CD4-positive, alpha-beta memory T cell (primary cell): ENCODE measurements at regions of chr16 and their contacts with region 1.

Region 1: GRCh38 chr16:67561824-67562525 is 351 bp upstream of the CTCF start:
- DNase-seq: peak; percentile 96 to 98 (median 97)
- H3K4me3 ChIP-seq: peak overlapping the region; percentile 61 to 78
- H3K4me3 Mint-ChIP-seq: peak overlapping the region; percentile 89 to 97 (median 91)
- H3K27ac ChIP-seq: peak overlapping the region; percentile 73
- H3K27ac Mint-ChIP-seq: peak overlapping the region; percentile 92 to 97 (median 96)
- H3K4me1 ChIP-seq: peaks cover 52% of the 10 kb centered on the region
- H3K4me1 Mint-ChIP-seq: peaks cover 23 to 53% (median 37%) of the 10 kb centered on the region in 4 donors
- H3K27me3 ChIP-seq: no peaks in the 10 kb centered on the region
- H3K27me3 Mint-ChIP-seq: no peaks in the 10 kb centered on the region

Region 2: GRCh38 chr16:67226804-67227557 is 335.0 kb before region 1 on chr16 and contains the start of gene TMEM208:
- CTCF ChIA-PET with region 1: no interaction called
- POLR2A ChIA-PET with region 1: no interaction called
- intact Hi-C with region 1: loop called (anchors 1 kb)
- DNase-seq: peak; percentile 95 to 99 (median 97)
- H3K4me3 ChIP-seq: peak within 1 kb of the TSS; percentile 73 to 99
- H3K4me3 Mint-ChIP-seq: peak within 1 kb of the TSS; percentile 98 to 100 (median 100)
- H3K27ac ChIP-seq: peak within 1 kb of the TSS; percentile 88
- H3K27ac Mint-ChIP-seq: peak within 1 kb of the TSS; percentile 96 to 100 (median 99)
- H3K4me1 ChIP-seq: peaks cover 51% of the 10 kb centered on the region
- H3K4me1 Mint-ChIP-seq: peaks cover 43 to 58% (median 54%) of the 10 kb centered on the region in 4 donors
- H3K27me3 ChIP-seq: no peaks in the 10 kb centered on the region
- H3K27me3 Mint-ChIP-seq: no peaks in the 10 kb centered on the region
- total RNA-seq, gene TMEM208: 35.5 to 35.7 TPM

Region 3: DNA sequence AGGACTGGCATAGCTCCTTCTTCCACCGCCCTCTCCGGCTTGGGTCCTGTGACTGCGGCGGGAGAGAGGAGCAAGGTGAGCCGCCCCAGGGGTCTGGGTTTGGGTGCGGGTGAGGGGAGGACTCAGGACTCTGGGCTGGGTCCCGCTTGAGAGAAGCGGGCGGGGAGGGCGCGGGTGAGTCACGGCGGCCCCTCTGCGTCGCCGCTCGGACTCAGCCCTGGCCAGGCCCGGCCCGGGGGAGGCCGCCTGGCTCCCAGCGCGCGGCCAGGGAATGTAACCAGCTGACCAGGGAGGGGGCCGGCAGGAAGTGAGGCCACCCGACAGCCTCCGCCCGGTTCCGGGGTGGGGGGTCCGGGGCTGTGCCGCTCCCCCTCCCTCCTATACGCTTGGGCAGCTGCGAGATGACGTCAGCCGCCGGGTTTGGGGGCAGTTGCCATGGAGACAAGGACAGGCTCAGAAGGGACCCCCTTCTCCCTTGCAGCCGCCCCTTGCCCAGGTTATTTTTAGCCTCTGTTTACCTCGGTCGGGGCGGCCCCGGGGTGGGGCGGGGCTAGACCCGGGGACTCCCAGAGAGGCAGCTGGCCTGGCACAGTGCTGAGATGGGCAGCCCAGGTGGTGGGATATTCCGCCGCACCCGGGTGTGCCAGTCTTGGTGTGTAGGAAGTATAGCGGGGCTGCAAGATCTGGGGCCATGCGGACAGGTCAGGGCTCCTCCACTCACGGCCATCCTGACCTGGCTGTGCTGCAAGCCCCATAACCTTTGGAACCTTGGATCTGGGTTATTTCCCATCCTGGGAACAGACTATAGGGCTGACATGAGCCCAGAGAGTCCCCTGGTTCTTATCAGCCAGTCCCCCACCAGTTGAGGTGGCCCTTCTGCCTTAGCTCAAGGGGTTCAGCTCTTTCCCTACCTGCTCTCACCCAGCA is 31.7 kb before region 1 on chr16:
- CTCF ChIA-PET with region 1: interaction called, 4 read pairs
- POLR2A ChIA-PET with region 1: interaction called, 16 read pairs
- intact Hi-C with region 1: no loop called
- DNase-seq: peak in 1 of 5 donors; percentile 55
- H3K4me3 ChIP-seq: peak overlapping the region in 1 of 2 donors; percentile 50
- H3K4me3 Mint-ChIP-seq: peak overlapping the region; percentile 73 to 87 (median 80)
- H3K27ac ChIP-seq: no peak overlapping the region
- H3K27ac Mint-ChIP-seq: peak overlapping the region in 2 of 7 donors; percentile 58 to 70
- H3K4me1 ChIP-seq: peaks cover 28% of the 10 kb centered on the region
- H3K4me1 Mint-ChIP-seq: peaks cover 6 to 38% (median 24%) of the 10 kb centered on the region in 4 donors
- H3K27me3 ChIP-seq: peaks cover 7% of the 10 kb centered on the region
- H3K27me3 Mint-ChIP-seq: peaks cover 4 to 14% of the 10 kb centered on the region in 2 donors

Region 4: DNA sequence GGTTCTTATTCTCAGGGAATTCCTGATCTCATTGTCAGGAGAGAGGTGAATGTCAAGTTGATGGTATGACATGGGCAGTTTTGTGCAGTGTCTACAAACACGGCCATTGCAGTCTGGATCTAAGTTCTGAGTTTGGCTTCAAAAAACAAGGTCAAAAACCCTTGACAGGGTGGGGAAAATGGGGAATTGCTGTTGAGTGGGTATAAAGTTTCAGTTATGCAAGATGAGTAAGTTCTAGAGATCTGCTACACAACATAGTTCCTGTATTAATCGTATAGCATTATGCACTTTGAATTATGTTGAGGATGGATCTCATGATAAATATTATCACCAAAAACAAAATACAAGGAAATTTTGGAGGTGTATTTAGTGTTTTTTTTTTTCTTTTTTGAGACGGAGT is 46.4 kb after region 1 on chr16:
- CTCF ChIA-PET with region 1: interaction called, 5 read pairs
- POLR2A ChIA-PET with region 1: interaction called, 3 read pairs
- intact Hi-C with region 1: loop called (anchors 5 kb)
- DNase-seq: no peak
- H3K4me3 ChIP-seq: no peak overlapping the region
- H3K4me3 Mint-ChIP-seq: no peak overlapping the region
- H3K27ac ChIP-seq: no peak overlapping the region
- H3K27ac Mint-ChIP-seq: peak overlapping the region in 4 of 7 donors; percentile 15 to 92 (median 65)
- H3K4me1 ChIP-seq: peaks cover 5% of the 10 kb centered on the region
- H3K4me1 Mint-ChIP-seq: peaks cover 13 to 26% (median 19%) of the 10 kb centered on the region in 4 donors
- H3K27me3 ChIP-seq: no peaks in the 10 kb centered on the region
- H3K27me3 Mint-ChIP-seq: no peaks in the 10 kb centered on the region

Region 5: DNA sequence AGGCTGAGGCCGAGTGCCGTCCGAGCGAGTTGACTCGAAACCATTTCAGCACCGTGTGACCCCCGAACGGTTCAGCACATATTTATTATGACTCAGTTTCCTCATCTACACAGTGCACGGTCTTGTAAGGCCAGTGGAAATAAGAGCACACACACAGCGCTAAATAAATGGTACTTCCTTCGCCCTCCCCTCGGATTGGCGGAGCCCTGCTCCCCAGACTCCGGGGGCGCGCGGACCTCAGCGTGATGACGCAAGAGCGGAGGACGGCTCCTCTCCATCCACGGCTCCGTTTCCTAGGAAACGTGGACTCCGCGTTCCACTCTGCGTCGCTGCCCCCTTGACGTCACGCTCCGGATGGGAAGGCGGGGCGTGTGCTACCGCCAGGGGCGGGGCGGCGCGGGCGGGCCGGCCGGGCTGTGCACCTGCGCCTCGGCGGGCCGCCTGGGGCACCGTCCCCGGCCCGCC is 98.6 kb after region 1 on chr16 and contains the start of gene PARD6A:
- CTCF ChIA-PET with region 1: interaction called, 12 read pairs
- POLR2A ChIA-PET with region 1: interaction called, 72 read pairs
- intact Hi-C with region 1: loop called (anchors 1 kb)
- DNase-seq: peak; percentile 94 to 97 (median 96)
- H3K4me3 ChIP-seq: peak within 1 kb of the TSS; percentile 98 to 100
- H3K4me3 Mint-ChIP-seq: peak within 1 kb of the TSS; percentile 93 to 98 (median 95)
- H3K27ac ChIP-seq: peak within 1 kb of the TSS; percentile 98
- H3K27ac Mint-ChIP-seq: peak within 1 kb of the TSS; percentile 97 to 99 (median 98)
- H3K4me1 ChIP-seq: peaks cover 27% of the 10 kb centered on the region
- H3K4me1 Mint-ChIP-seq: peaks cover 10 to 48% (median 20%) of the 10 kb centered on the region in 4 donors
- H3K27me3 ChIP-seq: no peaks in the 10 kb centered on the region
- H3K27me3 Mint-ChIP-seq: no peaks in the 10 kb centered on the region
- total RNA-seq, gene PARD6A: 7.4 to 8.8 TPM

Region 6: DNA sequence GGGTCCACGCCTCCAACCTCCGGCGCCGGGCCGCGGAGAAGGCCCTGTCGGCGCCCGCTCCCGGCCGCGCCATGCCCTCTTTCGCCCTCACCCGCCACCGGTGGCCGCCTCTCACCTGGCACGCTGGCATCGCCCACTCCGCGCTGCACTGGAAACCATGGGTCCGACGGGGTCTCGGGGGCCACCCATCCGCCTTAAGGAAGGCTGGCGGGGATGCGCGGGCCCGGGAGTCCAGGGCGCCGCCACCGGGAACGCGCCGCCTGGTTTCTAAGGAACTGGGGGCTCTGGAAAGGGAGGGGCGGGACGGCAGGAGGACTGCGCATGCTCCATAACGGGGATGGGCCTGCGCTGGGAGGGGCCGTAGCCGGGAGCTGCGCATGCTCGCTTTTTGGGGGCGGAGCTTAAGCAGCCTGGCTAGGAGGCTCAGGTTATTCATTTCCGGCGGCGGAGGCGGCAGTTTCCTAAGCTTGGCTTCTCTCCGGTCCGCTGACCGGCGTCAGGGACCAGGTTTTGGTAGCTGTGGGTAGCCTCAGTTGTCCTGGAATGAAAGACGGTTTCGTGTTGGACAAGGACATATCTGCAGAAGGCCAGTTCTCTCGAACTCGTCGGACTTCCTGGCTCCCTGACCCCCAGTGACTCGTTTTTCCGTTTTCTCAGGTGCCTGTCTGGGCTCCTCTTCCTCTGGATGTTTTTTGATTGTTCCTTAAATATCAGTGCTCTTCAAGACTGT is 157.2 kb after region 1 on chr16 and contains the start of gene GFOD2:
- CTCF ChIA-PET with region 1: no interaction called
- POLR2A ChIA-PET with region 1: interaction called, 9 read pairs
- intact Hi-C with region 1: loop called (anchors 1 kb)
- DNase-seq: peak; percentile 95 to 99 (median 96)
- H3K4me3 ChIP-seq: peak within 1 kb of the TSS; percentile 69 to 81
- H3K4me3 Mint-ChIP-seq: peak within 1 kb of the TSS; percentile 94 to 99 (median 97)
- H3K27ac ChIP-seq: peak within 1 kb of the TSS; percentile 83
- H3K27ac Mint-ChIP-seq: peak within 1 kb of the TSS; percentile 89 to 100 (median 98)
- H3K4me1 ChIP-seq: peaks cover 27% of the 10 kb centered on the region
- H3K4me1 Mint-ChIP-seq: peaks cover 29 to 50% (median 40%) of the 10 kb centered on the region in 4 donors
- H3K27me3 ChIP-seq: no peaks in the 10 kb centered on the region
- H3K27me3 Mint-ChIP-seq: no peaks in the 10 kb centered on the region
- total RNA-seq, gene GFOD2: 18.0 to 19.8 TPM

Region 7: GRCh38 chr16:67833418-67834241 is 271.7 kb after region 1 on chr16:
- CTCF ChIA-PET with region 1: no interaction called
- POLR2A ChIA-PET with region 1: interaction called, 10 read pairs
- intact Hi-C with region 1: no loop called
- DNase-seq: peak; percentile 90 to 94 (median 91)
- H3K4me3 ChIP-seq: peak overlapping the region; percentile 53 to 74
- H3K4me3 Mint-ChIP-seq: peak overlapping the region; percentile 87 to 95 (median 91)
- H3K27ac ChIP-seq: peak overlapping the region; percentile 60
- H3K27ac Mint-ChIP-seq: peak overlapping the region; percentile 80 to 91 (median 85)
- H3K4me1 ChIP-seq: peaks cover 16% of the 10 kb centered on the region
- H3K4me1 Mint-ChIP-seq: peaks cover 10 to 21% (median 15%) of the 10 kb centered on the region in 4 donors
- H3K27me3 ChIP-seq: no peaks in the 10 kb centered on the region
- H3K27me3 Mint-ChIP-seq: no peaks in the 10 kb centered on the region